Aorta (tissue), 5 donors: ENCODE measurements at regions of chr3 and their contacts with region 1.

Region 1: GRCh38 chr3:170740726-170741591 is 129.0 kb downstream of the RPL22L1 start:
- DNase-seq: peak; percentile 68 to 76
- ATAC-seq: peak; percentile 82
- H3K4me3 ChIP-seq: no peak overlapping the region
- H3K27ac ChIP-seq: peak overlapping the region; percentile 19 to 22
- H3K4me1 ChIP-seq: peaks cover 2 to 5% of the 10 kb centered on the region in 2 donors
- H3K27me3 ChIP-seq: no peaks in the 10 kb centered on the region

Region 2: DNA sequence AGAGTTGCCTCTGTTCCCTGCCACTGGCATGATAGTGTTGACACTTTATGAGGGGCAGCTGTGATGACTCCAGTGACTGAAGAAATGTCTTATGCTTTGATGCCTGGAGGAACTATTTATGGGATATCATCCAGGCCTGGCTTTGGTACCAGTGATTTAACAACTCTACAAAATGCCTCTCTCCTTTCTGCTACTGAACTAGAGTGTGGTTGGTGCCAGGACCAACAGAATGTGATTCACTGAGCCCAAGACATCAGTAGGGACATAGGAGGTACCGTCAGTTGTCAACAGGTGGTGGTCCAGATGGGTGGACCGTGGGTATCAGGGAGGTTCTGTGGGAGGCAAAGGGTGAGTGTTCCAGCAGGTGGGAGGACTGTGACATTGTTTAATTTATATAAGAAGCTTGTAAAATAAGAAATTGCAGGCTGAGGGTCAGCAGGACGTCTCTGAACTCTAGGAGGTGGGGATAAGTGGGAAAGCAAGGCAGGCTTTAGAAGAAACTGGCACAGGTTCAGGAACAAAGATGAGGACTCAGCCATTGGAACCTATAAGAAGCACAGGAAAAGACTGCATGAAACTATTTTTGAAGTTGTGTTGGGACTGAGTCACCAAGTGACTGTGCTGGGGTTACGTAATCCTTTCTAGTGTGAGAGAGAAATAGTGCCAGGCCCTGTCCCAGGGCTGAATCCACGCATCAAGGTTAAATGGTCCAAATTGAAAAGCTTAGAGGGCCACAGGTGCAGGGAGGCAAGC is 126.6 kb before region 1 on chr3:
- intact Hi-C with region 1: loop called in 1 of 2 experiments (anchors 10 kb)
- DNase-seq: no peak
- ATAC-seq: peak; percentile 83
- H3K4me3 ChIP-seq: no peak overlapping the region
- H3K27ac ChIP-seq: no peak overlapping the region
- H3K4me1 ChIP-seq: no peaks in the 10 kb centered on the region
- H3K27me3 ChIP-seq: no peaks in the 10 kb centered on the region

Region 3: DNA sequence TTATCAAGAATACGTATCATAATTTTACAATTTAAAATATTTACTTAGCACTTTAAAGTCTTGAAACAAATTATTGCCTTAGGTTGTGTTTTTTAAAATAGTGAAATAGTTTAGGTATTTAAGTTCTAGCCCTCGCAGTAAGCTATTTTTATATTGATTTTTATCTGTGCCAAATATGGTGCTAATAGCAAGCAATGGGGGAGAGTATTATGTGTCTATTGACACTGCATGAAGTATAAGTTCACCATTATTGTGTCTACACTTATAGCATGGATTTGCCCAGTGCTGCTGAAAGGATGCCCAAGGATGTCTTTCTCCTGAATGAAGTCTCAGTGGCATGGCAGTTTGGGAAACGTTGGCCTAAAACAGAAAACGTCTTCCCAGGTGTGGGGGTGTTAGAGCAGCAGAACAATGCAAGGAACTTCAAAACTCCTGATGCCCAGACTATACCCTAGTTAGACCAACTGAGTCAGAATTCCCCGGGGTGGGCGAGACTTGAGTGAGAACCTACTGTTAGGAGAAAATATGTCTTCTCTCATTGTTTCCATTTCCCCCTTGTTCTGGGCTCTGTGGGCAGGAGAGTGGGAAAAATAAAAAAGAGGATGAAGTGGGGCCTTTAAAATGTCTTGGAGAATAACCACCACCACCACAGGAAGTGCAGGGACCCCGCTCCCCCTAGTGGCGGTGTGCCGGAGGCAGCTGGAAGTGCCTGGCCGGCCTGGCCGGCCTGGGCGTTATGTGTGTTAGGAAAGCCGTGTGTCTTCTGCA is 50.9 kb before region 1 on chr3:
- intact Hi-C with region 1: loop called in 1 of 2 experiments (anchors 5 kb)
- DNase-seq: peak; percentile 48 to 83
- ATAC-seq: peak; percentile 74
- H3K4me3 ChIP-seq: no peak overlapping the region
- H3K27ac ChIP-seq: peak overlapping the region in 1 of 2 donors; percentile 37
- H3K4me1 ChIP-seq: no peaks in the 10 kb centered on the region
- H3K27me3 ChIP-seq: no peaks in the 10 kb centered on the region

Region 4: GRCh38 chr3:170889132-170889531 is 148.2 kb after region 1 on chr3:
- intact Hi-C with region 1: no loop called
- DNase-seq: no peak
- ATAC-seq: no peak
- H3K4me3 ChIP-seq: no peak overlapping the region
- H3K27ac ChIP-seq: no peak overlapping the region
- H3K4me1 ChIP-seq: no peaks in the 10 kb centered on the region
- H3K27me3 ChIP-seq: no peaks in the 10 kb centered on the region

Region 5: DNA sequence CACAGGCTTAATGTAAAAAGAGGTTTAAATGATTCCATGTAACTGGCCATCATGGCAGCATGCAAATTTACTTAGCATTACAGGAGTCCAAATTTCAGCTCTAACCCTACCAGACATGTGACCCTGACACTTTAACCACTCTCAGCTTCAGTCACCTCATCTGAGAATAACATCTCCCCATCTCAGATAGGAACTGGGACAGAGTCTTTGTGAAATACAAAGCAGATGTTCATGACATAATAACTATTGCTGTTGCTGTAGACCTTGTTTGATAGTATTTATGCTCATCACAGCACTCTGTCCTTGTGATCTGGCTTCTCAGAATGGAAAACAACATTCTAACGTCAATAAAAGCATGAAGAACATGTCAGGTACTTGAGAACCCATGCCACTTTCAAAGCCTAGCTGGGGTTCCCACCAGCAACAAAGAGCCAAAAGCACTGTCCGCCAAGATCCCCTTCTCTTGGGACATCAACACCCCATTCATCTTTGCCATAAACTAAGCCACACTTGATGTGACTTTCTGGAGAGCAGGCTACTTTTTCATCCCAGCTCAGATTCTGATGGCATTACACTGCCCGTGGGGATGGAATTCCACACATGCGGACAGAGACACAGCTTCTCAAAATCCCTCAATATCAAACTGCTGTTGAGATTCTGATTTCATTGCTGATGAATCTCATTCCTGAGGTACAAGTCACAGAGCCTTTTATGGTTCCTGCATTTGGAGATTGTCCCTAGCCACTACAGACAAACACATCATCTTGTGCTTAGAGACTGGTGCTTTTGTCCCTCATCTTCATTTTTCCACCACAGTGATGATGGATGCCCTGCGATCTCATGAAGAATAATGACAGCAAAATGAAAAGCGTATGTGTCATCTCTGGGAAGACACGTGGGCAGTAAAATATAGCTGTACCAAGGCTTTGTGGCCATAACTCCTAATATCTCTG is 516.6 kb after region 1 on chr3:
- intact Hi-C with region 1: no loop called
- DNase-seq: no peak
- ATAC-seq: no peak
- H3K4me3 ChIP-seq: no peak overlapping the region
- H3K27ac ChIP-seq: no peak overlapping the region
- H3K4me1 ChIP-seq: peaks cover 4 to 7% of the 10 kb centered on the region in 2 donors
- H3K27me3 ChIP-seq: no peaks in the 10 kb centered on the region